ENCODE measurements at regions of chr5 and their contacts with region 1.

Region 1: DNA sequence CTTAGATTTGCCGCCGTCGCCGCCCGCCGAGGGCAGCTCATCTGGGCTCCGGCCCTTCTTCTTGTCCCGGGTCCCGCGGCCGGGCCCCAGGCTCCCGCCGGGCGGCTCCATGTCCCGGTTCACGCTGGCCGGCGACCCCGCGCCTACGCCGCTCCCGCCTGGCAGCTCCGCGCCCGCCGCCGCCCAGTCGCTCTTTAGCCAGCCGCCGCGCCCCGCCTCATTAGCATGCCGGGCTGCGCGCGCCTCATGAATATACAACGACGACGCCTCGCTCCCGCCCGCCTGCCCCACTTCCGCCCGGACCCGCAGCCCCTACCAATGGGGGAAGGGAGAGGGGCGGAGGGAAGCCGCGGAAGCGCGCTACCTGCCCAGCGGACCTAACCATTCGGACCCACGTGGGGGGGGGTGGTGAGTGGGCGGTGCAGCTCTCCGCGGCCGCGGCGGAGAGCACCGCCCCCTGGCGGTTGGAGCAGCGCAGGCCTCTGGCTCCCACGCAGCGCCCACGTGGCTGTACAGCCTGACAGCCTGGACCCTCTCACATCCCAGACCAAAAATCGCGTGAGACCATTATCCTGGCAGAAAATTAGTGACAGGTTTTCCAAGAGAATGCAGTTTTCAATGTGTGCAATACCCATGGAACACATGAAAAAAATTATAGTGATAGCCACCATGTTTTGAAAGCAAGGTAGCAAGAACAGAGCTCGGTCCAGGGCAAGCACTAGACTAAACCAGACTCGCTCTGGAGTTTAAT is at the start of gene DIAPH1:
- DNase-seq: peak; percentile 97
- H3K4me3 Mint-ChIP-seq: peak within 1 kb of the TSS; percentile 99
- H3K27ac Mint-ChIP-seq: peak within 1 kb of the TSS; percentile 97
- H3K4me1 Mint-ChIP-seq: peaks cover 59% of the 10 kb centered on the region
- H3K27me3 Mint-ChIP-seq: no peaks in the 10 kb centered on the region
- total RNA-seq, gene DIAPH1: 297 to 302 TPM

Region 2: DNA sequence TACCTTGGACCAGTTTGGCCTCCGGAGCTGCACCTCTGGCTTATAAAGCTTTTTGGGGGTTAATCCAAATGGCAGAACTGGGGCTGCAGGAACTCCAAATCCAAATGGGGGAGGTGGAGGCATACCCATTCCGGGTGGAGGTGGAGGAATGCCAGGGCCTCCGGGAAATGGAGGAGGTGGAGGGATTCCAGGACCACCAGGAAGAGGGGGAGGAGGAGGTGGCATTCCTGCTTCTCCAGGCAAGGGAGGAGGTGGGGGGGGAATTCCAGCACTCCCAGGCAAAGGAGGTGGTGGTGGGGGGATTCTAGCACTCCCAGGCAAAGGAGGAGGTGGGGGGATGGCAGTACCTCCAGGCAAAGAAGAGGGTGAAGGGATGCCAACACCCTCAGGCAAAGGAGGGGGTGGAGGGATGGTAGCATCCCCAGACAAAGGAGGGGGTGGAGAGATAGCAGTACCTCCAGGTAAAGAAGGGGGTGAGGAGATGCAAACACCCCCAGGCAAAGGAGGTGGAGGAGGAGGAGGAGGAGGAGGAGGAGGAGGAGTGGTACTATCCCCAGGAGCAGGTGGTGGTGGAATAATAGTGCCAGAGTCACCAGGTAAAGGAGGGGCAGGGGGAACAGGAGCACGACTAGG is 45.4 kb before region 1 on chr5:
- CTCF ChIA-PET with region 1: interaction called, 14 read pairs
- POLR2A ChIA-PET with region 1: no interaction called
- DNase-seq: no peak
- H3K4me3 Mint-ChIP-seq: no peak overlapping the region
- H3K27ac Mint-ChIP-seq: no peak overlapping the region
- H3K4me1 Mint-ChIP-seq: no peaks in the 10 kb centered on the region
- H3K27me3 Mint-ChIP-seq: no peaks in the 10 kb centered on the region

Region 3: GRCh38 chr5:141590127-141590526 is 28.9 kb before region 1 on chr5:
- CTCF ChIA-PET with region 1: interaction called, 183 read pairs
- POLR2A ChIA-PET with region 1: interaction called, 19 read pairs
- DNase-seq: no peak
- H3K4me3 Mint-ChIP-seq: no peak overlapping the region
- H3K27ac Mint-ChIP-seq: no peak overlapping the region
- H3K4me1 Mint-ChIP-seq: peaks cover 39% of the 10 kb centered on the region
- H3K27me3 Mint-ChIP-seq: no peaks in the 10 kb centered on the region

Region 4: DNA sequence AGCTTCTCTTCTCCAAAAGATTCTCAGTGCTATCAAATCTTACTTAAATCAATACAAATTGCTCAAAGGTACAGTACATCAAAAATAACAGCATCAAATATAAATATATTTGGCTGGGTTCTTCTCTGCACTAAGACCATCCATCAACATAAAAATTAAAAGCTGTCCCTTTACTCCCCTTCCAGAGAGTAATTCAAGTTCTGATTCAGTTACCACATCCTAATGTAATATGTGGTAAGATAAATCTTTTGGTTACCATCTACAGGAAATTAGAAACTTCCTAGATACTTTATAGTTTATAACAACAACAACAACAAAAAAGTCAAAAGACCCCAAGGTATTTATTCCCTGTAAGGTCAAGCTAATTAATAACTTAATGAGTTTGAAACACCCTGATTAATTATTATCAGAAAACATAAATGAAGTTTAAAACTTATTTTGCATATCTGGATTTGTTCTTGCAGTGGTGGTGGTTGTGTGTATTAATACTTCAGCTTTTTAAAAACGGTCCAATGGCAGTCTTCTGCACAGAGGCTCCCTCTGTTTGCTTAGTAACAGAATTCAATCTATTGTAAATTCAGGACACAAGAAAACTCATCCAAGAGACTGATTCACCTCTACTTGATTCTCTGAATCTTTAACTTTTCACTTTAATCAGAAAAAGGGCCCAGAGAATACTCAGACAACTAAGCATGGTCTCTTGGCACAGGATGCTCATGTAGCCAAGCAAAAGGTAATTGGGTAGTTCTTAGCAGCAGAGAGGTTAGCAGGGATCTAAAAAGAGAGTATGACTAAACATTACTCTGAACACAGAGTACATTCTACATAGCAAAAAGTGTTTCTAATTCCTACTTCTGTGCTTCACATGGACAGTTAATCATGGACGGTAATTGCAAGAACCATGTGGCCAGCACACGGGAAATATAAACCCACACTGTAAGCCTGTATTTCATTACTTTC is 20.3 kb before region 1 on chr5:
- CTCF ChIA-PET with region 1: interaction called, 183 read pairs
- POLR2A ChIA-PET with region 1: no interaction called
- DNase-seq: no peak
- H3K4me3 Mint-ChIP-seq: no peak overlapping the region
- H3K27ac Mint-ChIP-seq: peak overlapping the region; percentile 44
- H3K4me1 Mint-ChIP-seq: peaks cover 77% of the 10 kb centered on the region
- H3K27me3 Mint-ChIP-seq: no peaks in the 10 kb centered on the region

Region 5: GRCh38 chr5:141605523-141606277 is 13.3 kb before region 1 on chr5:
- CTCF ChIA-PET with region 1: interaction called, 38 read pairs
- POLR2A ChIA-PET with region 1: no interaction called
- DNase-seq: peak; percentile 90
- H3K4me3 Mint-ChIP-seq: peak overlapping the region; percentile 66
- H3K27ac Mint-ChIP-seq: peak overlapping the region; percentile 95
- H3K4me1 Mint-ChIP-seq: peaks cover 88% of the 10 kb centered on the region
- H3K27me3 Mint-ChIP-seq: no peaks in the 10 kb centered on the region

Region 6: DNA sequence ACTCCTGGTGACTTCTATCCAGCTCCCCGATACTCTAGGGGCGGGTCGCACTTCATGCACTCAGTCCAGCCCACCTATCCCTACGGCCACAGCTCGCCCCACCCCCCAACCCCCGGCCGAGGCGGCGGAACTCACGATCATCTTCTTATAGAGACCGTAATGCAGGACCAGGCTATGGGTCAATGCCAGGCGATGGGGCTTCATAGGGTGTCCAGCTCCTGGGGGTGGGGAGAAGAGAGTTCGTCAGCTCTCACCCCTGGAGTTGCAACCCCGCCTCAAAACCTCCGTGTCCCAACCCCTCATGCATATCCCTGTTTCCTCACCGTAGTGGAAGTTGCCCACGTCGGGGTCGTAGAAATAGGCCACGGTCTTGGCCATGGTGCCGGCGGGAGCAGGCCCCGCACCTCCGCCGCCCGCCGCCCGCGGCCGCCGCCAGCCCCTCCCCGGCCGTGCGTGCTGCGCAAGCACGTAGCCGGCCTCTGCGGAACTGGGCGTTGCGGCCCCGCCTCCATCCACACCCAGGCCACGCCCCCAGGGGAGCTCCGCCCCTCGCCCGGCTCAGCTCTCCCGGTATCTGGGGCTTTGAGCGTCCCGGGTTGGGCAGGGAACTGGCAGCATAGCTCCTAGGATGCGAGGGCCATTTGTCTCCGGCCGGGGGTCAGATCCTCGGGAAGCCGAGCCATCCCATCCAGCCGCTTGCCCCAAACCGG is 17.6 kb after region 1 on chr5 and contains the starts of genes HDAC3 and RELL2:
- CTCF ChIA-PET with region 1: interaction called, 318 read pairs
- POLR2A ChIA-PET with region 1: interaction called, 4 read pairs
- DNase-seq: peak; percentile 92
- H3K4me3 Mint-ChIP-seq: peak within 1 kb of the TSS; percentile 92
- H3K27ac Mint-ChIP-seq: peak within 1 kb of the TSS; percentile 90
- H3K4me1 Mint-ChIP-seq: peaks cover 51% of the 10 kb centered on the region
- H3K27me3 Mint-ChIP-seq: no peaks in the 10 kb centered on the region
- total RNA-seq, gene HDAC3: 70.2 to 73.9 TPM
- total RNA-seq, gene RELL2: 25.1 to 26.9 TPM

Measured in activated CD4-positive, alpha-beta T cell treated with anti-CD3 and anti-CD28 coated beads, Interleukin-2, amount 10 ng/mL, durations not matched to agents 7 days and 5 days (primary cell).